ENCODE measurements at regions of chr3 and their contacts with region 1.

Region 1: GRCh38 chr3:49021813-49022687 is at the start of gene NDUFAF3:
- DNase-seq: peak; percentile 85 to 95 (median 93)
- ATAC-seq: peak; percentile 73
- H3K4me3 ChIP-seq: peak within 1 kb of the TSS; percentile 97 to 98
- H3K4me3 Mint-ChIP-seq: peak within 1 kb of the TSS; percentile 98
- H3K27ac ChIP-seq: peak within 1 kb of the TSS; percentile 98 to 99
- H3K27ac Mint-ChIP-seq: peak within 1 kb of the TSS; percentile 98
- H3K4me1 ChIP-seq: peaks cover 38% of the 10 kb centered on the region
- H3K4me1 Mint-ChIP-seq: peaks cover 43% of the 10 kb centered on the region
- H3K27me3 ChIP-seq: no peaks in the 10 kb centered on the region
- H3K27me3 Mint-ChIP-seq: no peaks in the 10 kb centered on the region
- CTCF ChIP-seq: peak; percentile 94
- total RNA-seq, gene NDUFAF3: 44.4 to 48.5 TPM

Region 2: DNA sequence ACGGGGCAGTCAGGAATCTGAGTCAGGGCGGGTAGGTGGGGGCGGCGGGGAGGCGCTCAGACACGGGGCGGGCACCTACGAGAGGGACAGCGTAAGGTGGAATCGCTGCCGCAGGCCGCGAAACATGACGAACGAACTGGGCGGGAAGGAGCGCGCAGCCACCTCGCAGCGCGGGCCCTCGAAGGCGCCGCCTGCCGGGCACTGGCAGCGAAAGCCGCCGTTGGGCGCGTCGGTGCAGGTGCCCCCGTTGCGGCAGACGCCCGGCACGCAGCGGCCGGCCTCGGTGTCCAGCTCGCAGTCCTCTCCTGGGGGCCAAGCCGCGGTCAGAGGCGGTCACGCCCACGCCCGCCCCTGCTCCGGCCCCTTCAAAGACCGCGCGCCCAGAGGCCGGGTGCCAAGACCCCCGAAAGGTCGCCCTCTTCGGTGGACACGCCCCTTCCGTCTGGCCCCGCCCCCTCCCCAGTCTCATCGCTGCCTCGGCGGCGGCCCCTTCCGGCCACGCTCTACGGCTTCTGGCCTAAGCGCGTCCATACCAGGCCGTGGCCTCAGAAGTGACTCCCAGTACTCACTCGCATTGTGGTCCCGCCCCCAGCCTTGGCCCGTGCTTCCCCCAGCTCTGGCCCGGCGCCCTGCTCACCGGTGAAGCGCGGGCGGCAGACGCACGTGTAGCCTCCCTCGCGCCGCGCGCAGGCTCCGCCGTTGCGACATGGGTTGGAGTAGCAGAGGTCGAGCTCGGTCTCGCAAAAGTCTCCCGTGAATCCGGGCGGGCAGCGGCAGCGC is 365.8 kb before region 1 on chr3:
- CTCF ChIA-PET with region 1: no interaction called
- POLR2A ChIA-PET with region 1: no interaction called
- intact Hi-C with region 1: loop called in 1 of 2 experiments (anchors 5 kb)
- DNase-seq: peak; percentile 71 to 94 (median 83)
- ATAC-seq: peak; percentile 81
- H3K4me3 ChIP-seq: peak overlapping the region; percentile 53 to 83
- H3K4me3 Mint-ChIP-seq: peak overlapping the region; percentile 83
- H3K27ac ChIP-seq: peak overlapping the region; percentile 65 to 68
- H3K27ac Mint-ChIP-seq: peak overlapping the region; percentile 90
- H3K4me1 ChIP-seq: peaks cover 18% of the 10 kb centered on the region
- H3K4me1 Mint-ChIP-seq: peaks cover 18% of the 10 kb centered on the region
- H3K27me3 ChIP-seq: peaks cover 0 to 4% of the 10 kb centered on the region in 2 experiments
- H3K27me3 Mint-ChIP-seq: peaks cover 11% of the 10 kb centered on the region
- CTCF ChIP-seq: peak; percentile 60

Region 3: DNA sequence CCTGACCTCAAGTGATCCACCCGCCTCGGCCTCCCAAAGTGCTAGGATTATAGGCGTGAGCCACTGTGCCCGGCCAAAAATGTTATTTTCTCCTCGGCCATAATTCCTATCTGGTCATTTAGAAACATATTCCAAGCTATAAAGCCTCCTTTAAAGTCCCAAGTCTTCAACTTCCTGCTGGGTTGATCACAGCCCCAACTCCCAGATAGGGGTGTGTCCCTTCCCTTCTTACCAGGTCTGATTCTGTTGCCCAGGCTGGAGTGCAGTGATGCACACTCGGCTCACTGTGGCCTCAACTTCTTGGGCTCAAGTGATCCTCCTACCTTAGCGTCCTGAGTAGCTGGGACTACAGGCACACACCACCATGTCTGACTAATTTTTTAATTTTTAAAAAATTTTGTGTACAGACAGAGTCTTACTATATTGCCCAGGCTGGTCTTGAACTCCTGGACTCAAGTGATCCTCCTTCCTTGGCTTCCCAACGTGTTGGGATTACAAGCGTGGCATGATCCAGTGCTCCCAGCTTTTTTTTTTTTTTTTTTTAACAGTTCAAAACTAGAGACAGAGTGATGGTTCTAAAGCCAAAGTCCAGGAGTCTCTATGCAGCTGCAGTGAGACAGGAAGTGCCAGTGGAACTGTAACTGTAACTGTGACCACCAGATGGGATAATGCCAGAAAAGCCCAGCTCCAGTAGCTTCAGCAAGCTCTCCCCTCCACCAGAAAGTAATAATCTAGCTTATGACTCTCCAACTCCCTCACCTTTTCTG is 166.2 kb before region 1 on chr3:
- CTCF ChIA-PET with region 1: no interaction called
- POLR2A ChIA-PET with region 1: no interaction called
- intact Hi-C with region 1: no loop called
- DNase-seq: no peak
- ATAC-seq: no peak
- H3K4me3 ChIP-seq: no peak overlapping the region
- H3K4me3 Mint-ChIP-seq: no peak overlapping the region
- H3K27ac ChIP-seq: no peak overlapping the region
- H3K27ac Mint-ChIP-seq: peak overlapping the region; percentile 4
- H3K4me1 ChIP-seq: no peaks in the 10 kb centered on the region
- H3K4me1 Mint-ChIP-seq: peaks cover 2% of the 10 kb centered on the region
- H3K27me3 ChIP-seq: no peaks in the 10 kb centered on the region
- H3K27me3 Mint-ChIP-seq: no peaks in the 10 kb centered on the region
- CTCF ChIP-seq: no peak

Region 4: DNA sequence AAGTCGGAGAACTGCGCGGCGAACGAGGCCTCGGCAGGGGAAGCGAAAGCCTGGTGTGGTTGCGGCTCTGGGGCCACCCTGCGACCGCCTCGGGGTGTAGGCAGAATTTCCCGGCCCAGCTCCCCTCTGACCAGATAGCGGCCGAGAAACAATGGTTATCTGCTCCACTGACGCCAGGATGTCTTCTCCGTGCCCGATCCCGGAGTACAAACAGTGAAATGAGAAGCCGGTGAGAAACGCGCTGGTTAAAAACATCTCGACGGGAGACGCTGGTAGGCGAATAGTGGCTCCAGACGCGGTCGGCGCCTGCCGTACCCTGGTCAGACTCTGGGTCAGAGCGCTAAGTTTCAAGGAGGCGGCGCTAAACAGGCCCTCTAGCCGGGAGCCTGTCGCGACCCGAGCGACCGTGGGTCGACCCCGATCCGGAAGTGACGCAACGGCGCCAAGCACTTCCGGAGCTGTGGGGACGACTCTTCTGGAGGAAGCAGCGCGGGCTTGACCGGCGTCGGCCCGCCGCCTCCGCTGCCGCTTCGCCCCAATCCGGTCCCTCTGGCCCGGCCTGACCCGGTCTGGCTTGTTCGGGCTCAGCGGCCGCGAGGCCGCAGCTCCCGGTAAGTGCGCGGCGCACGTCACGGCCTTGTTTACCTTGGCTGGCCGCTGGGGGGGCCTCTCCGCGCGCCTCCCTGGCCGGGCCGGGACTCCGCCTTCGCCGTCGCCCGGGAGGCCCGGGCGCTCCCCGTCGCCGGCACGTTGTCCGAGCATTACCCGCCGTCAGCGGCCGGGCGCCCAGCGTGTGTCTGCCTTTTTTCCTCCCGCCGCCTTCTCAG is 103.4 kb before region 1 on chr3 and contains the start of gene ARIH2:
- CTCF ChIA-PET with region 1: no interaction called
- POLR2A ChIA-PET with region 1: no interaction called
- intact Hi-C with region 1: loop called in 1 of 2 experiments (anchors 5 kb)
- DNase-seq: peak; percentile 74 to 95 (median 88)
- ATAC-seq: peak; percentile 72
- H3K4me3 ChIP-seq: peak within 1 kb of the TSS; percentile 92 to 93
- H3K4me3 Mint-ChIP-seq: peak within 1 kb of the TSS; percentile 98
- H3K27ac ChIP-seq: peak within 1 kb of the TSS; percentile 99
- H3K27ac Mint-ChIP-seq: peak within 1 kb of the TSS; percentile 99
- H3K4me1 ChIP-seq: peaks cover 22% of the 10 kb centered on the region
- H3K4me1 Mint-ChIP-seq: peaks cover 27% of the 10 kb centered on the region
- H3K27me3 ChIP-seq: no peaks in the 10 kb centered on the region
- H3K27me3 Mint-ChIP-seq: no peaks in the 10 kb centered on the region
- CTCF ChIP-seq: peak; percentile 24
- total RNA-seq, gene ARIH2: 225 to 242 TPM

Region 5: DNA sequence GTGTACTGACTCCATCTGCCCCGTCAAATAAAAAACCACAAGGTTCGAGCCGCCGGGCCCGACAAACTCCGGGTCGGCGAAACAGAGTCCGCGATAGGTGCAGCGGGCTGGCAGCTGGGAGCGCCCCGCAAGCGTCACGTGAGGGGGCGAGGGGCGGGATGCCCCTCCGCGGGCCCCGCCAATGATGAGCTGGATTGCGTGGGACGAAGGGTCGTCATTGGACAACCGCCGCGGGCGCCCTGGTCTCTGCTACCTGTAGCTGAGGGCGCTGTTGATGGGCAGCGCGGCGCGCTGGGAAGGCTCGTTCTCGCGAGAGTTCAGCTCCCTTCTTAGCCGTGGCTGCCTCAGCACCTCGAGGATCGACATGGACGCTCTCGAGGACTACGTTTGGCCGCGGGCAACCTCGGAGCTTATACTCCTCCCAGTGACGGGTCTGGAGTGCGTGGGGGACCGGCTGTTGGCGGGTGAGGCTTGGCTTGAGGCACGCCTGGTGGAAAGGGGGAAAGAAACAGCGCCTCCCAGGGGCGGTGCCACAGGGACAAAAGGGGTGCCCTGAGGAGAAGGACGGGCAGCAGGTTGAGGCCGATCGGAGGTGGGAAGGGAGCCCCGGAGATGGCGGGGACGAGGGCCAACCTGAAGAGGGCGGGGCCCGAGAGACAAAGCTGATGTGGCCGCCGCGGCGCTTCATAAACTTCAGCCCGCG is 14.8 kb before region 1 on chr3 and contains the start of gene WDR6:
- CTCF ChIA-PET with region 1: interaction called, 76 read pairs
- POLR2A ChIA-PET with region 1: interaction called, 122 read pairs
- intact Hi-C with region 1: loop called (anchors 1 kb)
- DNase-seq: peak; percentile 94 to 99 (median 96)
- ATAC-seq: peak; percentile 87
- H3K4me3 ChIP-seq: peak within 1 kb of the TSS; percentile 87 to 92
- H3K4me3 Mint-ChIP-seq: peak within 1 kb of the TSS; percentile 100
- H3K27ac ChIP-seq: peak within 1 kb of the TSS; percentile 81 to 92
- H3K27ac Mint-ChIP-seq: peak within 1 kb of the TSS; percentile 99
- H3K4me1 ChIP-seq: peaks cover 15% of the 10 kb centered on the region
- H3K4me1 Mint-ChIP-seq: peaks cover 30% of the 10 kb centered on the region
- H3K27me3 ChIP-seq: no peaks in the 10 kb centered on the region
- H3K27me3 Mint-ChIP-seq: no peaks in the 10 kb centered on the region
- CTCF ChIP-seq: peak; percentile 34
- total RNA-seq, gene WDR6: 112 to 130 TPM

Region 6: GRCh38 chr3:49339945-49340800 is 318.1 kb after region 1 on chr3 and contains the start of gene USP4:
- CTCF ChIA-PET with region 1: no interaction called
- POLR2A ChIA-PET with region 1: interaction called, 3 read pairs
- intact Hi-C with region 1: loop called in 1 of 2 experiments (anchors 10 kb)
- DNase-seq: peak; percentile 79 to 97 (median 90)
- ATAC-seq: peak; percentile 85
- H3K4me3 ChIP-seq: peak within 1 kb of the TSS; percentile 78 to 89
- H3K4me3 Mint-ChIP-seq: peak within 1 kb of the TSS; percentile 93
- H3K27ac ChIP-seq: peak within 1 kb of the TSS; percentile 98
- H3K27ac Mint-ChIP-seq: peak within 1 kb of the TSS; percentile 96
- H3K4me1 ChIP-seq: peaks cover 40% of the 10 kb centered on the region
- H3K4me1 Mint-ChIP-seq: peaks cover 48% of the 10 kb centered on the region
- H3K27me3 ChIP-seq: no peaks in the 10 kb centered on the region
- H3K27me3 Mint-ChIP-seq: no peaks in the 10 kb centered on the region
- CTCF ChIP-seq: peak; percentile 36
- total RNA-seq, gene USP4: 78.0 to 92.4 TPM

Region 7: DNA sequence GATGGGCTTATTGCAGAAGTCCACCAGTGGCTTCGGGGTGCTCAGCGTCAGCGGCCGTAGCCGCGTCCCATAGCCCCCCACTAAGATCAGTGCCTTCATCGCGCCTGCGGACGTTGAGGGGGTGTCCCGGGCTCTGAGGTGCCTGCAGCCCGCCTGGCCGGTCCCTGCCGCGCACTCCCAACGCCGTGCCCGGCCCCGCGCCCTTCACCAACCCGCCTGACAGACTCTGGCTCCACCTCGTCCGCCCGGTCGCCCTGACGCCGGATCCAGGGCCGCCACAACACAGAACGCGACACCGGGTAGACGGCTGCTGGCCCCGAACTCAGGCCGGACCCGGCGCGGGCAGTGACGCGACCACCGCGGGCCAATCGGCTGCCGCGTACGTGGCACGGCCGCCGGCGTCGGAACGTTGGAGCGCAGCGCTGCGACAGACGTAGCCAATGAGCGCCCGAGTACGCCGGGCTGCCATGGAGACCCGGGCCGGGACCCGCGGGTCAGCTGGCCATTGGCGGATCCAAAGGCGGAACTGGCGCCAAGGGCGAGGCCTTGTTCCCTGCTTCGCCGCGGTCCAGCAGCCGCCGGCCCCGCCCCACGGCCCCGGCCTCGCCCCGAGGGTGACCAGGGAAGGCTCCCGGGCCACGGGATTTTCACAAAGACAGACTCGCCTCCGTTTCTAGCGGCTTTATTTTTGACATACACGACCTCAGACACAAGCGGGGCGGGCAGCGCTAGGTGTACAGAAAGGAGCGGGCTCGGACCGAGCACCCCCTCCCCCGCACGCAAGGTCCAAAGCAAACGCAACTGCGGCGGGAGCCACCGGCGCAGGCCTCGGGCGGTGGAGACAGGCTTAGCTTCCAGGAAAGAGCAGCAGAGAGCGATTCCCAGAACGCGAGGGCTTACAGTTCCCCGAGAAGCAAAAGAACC is 701.8 kb after region 1 on chr3 and contains the start of gene GMPPB:
- CTCF ChIA-PET with region 1: no interaction called
- POLR2A ChIA-PET with region 1: no interaction called
- intact Hi-C with region 1: loop called in 1 of 2 experiments (anchors 10 kb)
- DNase-seq: peak; percentile 82 to 95 (median 91)
- ATAC-seq: peak; percentile 72
- H3K4me3 ChIP-seq: peak within 1 kb of the TSS; percentile 91 to 95
- H3K4me3 Mint-ChIP-seq: peak within 1 kb of the TSS; percentile 86
- H3K27ac ChIP-seq: peak within 1 kb of the TSS; percentile 84 to 93
- H3K27ac Mint-ChIP-seq: peak within 1 kb of the TSS; percentile 90
- H3K4me1 ChIP-seq: peaks cover 19% of the 10 kb centered on the region
- H3K4me1 Mint-ChIP-seq: peaks cover 36% of the 10 kb centered on the region
- H3K27me3 ChIP-seq: no peaks in the 10 kb centered on the region
- H3K27me3 Mint-ChIP-seq: no peaks in the 10 kb centered on the region
- CTCF ChIP-seq: no peak
- total RNA-seq, gene GMPPB: 34.9 to 36.6 TPM

Region 8: GRCh38 chr3:49992326-49992725 is 970.3 kb after region 1 on chr3:
- CTCF ChIA-PET with region 1: no interaction called
- POLR2A ChIA-PET with region 1: no interaction called
- intact Hi-C with region 1: no loop called
- DNase-seq: no peak
- ATAC-seq: no peak
- H3K4me3 ChIP-seq: no peak overlapping the region
- H3K4me3 Mint-ChIP-seq: no peak overlapping the region
- H3K27ac ChIP-seq: no peak overlapping the region
- H3K27ac Mint-ChIP-seq: no peak overlapping the region
- H3K4me1 ChIP-seq: no peaks in the 10 kb centered on the region
- H3K4me1 Mint-ChIP-seq: peaks cover 2% of the 10 kb centered on the region
- H3K27me3 ChIP-seq: no peaks in the 10 kb centered on the region
- H3K27me3 Mint-ChIP-seq: no peaks in the 10 kb centered on the region
- CTCF ChIP-seq: no peak